Activated CD8-positive, alpha-beta T cell treated with anti-CD3 and anti-CD28 coated beads, Interleukin-2, amount 10 ng/mL, durations not matched to agents 7 days and 5 days (primary cell): ENCODE measurements at regions of chr13 and their contacts with region 1.

Region 1: GRCh38 chr13:98530217-98530616 is 46.7 kb downstream of the STK24 start:
- DNase-seq: no peak
- ATAC-seq: no peak
- H3K4me3 Mint-ChIP-seq: no peak overlapping the region
- H3K27ac Mint-ChIP-seq: no peak overlapping the region
- H3K4me1 Mint-ChIP-seq: peaks cover 71% of the 10 kb centered on the region
- H3K27me3 Mint-ChIP-seq: no peaks in the 10 kb centered on the region

Region 2: GRCh38 chr13:98541191-98541590 is 11.0 kb after region 1 on chr13:
- CTCF ChIA-PET with region 1: interaction called, 11 read pairs
- POLR2A ChIA-PET with region 1: no interaction called
- DNase-seq: no peak
- ATAC-seq: no peak
- H3K4me3 Mint-ChIP-seq: no peak overlapping the region
- H3K27ac Mint-ChIP-seq: no peak overlapping the region
- H3K4me1 Mint-ChIP-seq: peaks cover 87% of the 10 kb centered on the region
- H3K27me3 Mint-ChIP-seq: no peaks in the 10 kb centered on the region